Natural killer cell (primary cell): ENCODE measurements at regions of chr15 and their contacts with region 1.

Region 1: DNA sequence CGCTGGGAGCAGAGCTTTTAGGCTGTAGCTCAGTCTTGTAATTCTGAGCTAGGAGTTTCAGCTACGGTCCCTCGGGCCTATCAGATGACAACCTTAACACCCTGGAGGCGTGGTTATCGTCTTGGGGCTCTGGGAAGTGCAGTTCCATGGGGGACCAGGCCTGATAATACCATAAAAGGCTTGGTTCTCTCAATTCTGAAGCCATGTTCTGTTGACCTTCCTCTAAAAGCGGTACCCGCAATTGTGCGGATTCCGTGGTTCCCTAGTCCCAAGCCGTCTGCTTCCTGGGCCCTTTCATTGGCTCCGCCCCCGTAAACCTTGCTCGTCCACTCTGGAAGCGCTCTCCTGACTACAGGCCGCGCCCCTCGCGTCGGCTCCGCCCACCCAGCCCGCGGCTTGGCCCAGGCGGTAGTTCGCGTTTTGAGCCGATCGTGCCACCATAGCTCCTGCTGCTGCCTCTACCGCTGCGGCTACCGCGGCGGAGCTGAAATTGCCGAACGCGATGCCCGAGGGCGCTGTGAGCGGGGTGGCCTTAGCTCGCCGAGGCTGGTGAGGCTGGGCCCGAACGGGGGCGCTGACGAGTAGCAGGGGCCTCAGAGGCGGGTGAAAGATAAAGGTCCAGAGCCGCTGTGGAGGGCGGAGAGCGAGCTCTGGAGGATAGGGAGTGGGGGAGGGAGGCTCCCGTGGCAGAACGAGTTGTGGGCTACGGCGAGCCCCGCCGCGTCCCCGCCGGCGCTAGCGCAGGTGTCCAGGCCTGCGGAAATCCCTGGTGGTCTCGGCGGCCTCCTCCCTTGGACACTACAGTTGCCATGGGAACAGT is at the start of gene MAPKBP1:
- DNase-seq: peak; percentile 98 to 99
- ATAC-seq: peak; percentile 90 to 97 (median 91)
- H3K4me3 ChIP-seq: peak within 1 kb of the TSS; percentile 89
- H3K4me3 Mint-ChIP-seq: peak within 1 kb of the TSS; percentile 97
- H3K27ac ChIP-seq: peak within 1 kb of the TSS; percentile 82
- H3K27ac Mint-ChIP-seq: peak within 1 kb of the TSS; percentile 93 to 94
- H3K4me1 ChIP-seq: peaks cover 23% of the 10 kb centered on the region
- H3K4me1 Mint-ChIP-seq: peaks cover 60 to 63% of the 10 kb centered on the region in 2 donors
- H3K27me3 ChIP-seq: no peaks in the 10 kb centered on the region
- H3K27me3 Mint-ChIP-seq: no peaks in the 10 kb centered on the region
- CTCF ChIP-seq: peak; percentile 72
- total RNA-seq, gene MAPKBP1: 44.8 to 55.4 (median 49.0) TPM

Region 2: DNA sequence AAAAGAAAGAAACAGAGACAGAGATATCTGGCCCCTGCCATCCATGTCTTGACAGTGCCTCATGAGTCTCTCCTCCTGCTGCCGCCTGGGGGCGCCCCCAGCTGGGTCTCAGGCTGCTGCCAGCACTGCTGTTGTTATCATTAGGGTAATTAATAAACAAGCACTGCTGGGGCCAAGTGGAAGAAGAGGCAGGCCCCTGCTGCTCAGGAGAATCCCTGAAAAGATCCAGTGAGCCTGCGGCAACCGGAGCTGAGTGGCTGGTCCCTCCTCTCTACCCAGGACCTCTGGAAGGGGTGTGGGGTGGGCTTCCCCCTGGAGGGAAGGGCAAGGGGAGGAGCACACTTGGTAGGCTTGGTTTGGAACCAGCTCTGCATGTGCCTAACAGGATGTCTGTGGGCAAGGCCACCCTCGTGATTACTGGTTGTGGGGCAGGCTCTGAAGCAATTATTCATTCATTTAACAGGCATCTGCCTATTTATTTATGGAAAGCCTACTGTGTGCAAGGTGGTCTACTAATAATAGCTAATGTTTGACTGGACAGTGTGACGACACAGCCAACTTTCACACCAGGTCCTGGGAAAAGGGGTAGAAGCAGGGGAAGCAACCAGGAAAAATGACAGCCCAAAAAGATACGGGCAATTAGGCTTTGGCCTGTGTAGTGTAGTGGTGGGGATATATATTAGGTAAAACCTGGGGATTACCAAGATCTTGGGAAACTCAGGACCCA is 216.4 kb before region 1 on chr15:
- intact Hi-C with region 1: loop called (anchors 5 kb)
- DNase-seq: peak; percentile 76 to 87
- ATAC-seq: peak; percentile 84 to 92 (median 90)
- H3K4me3 ChIP-seq: no peak overlapping the region
- H3K4me3 Mint-ChIP-seq: peak overlapping the region; percentile 94
- H3K27ac ChIP-seq: peak overlapping the region; percentile 10
- H3K27ac Mint-ChIP-seq: peak overlapping the region; percentile 90 to 95
- H3K4me1 ChIP-seq: peaks cover 21% of the 10 kb centered on the region
- H3K4me1 Mint-ChIP-seq: peaks cover 11 to 26% of the 10 kb centered on the region in 2 donors
- H3K27me3 ChIP-seq: peaks cover 23% of the 10 kb centered on the region
- H3K27me3 Mint-ChIP-seq: peaks cover 0 to 26% of the 10 kb centered on the region in 2 donors
- CTCF ChIP-seq: peak; percentile 97

Region 3: DNA sequence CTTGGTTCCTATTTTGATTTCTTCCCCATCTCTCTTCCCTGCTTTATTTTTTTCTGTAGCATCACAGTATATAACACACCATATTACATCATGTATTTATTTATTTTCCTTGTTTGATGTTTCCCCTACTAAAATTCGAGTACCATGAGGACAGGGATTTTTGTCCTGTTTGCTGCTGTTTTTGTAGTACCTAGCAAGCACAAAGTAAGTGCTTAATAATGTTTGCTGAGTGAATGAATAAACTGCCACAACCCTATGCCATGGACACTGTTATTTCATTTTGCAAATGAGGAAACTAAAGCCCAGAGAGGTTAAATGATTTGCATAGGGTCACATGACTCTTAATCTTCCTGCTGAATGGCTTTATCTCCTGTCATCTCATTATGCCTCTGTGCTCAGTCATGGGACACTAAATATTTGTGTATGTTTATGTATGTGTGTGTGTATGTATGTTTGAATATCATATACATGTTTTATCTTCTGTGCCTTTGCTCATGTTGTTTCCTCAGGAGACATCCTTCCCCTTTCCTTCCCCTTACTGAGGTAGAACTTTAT is 140.1 kb before region 1 on chr15:
- intact Hi-C with region 1: no loop called
- DNase-seq: no peak
- ATAC-seq: no peak
- H3K4me3 ChIP-seq: no peak overlapping the region
- H3K4me3 Mint-ChIP-seq: no peak overlapping the region
- H3K27ac ChIP-seq: no peak overlapping the region
- H3K27ac Mint-ChIP-seq: no peak overlapping the region
- H3K4me1 ChIP-seq: no peaks in the 10 kb centered on the region
- H3K4me1 Mint-ChIP-seq: no peaks in the 10 kb centered on the region
- H3K27me3 ChIP-seq: no peaks in the 10 kb centered on the region
- H3K27me3 Mint-ChIP-seq: peaks cover 0 to 2% of the 10 kb centered on the region in 2 donors
- CTCF ChIP-seq: no peak

Region 4: DNA sequence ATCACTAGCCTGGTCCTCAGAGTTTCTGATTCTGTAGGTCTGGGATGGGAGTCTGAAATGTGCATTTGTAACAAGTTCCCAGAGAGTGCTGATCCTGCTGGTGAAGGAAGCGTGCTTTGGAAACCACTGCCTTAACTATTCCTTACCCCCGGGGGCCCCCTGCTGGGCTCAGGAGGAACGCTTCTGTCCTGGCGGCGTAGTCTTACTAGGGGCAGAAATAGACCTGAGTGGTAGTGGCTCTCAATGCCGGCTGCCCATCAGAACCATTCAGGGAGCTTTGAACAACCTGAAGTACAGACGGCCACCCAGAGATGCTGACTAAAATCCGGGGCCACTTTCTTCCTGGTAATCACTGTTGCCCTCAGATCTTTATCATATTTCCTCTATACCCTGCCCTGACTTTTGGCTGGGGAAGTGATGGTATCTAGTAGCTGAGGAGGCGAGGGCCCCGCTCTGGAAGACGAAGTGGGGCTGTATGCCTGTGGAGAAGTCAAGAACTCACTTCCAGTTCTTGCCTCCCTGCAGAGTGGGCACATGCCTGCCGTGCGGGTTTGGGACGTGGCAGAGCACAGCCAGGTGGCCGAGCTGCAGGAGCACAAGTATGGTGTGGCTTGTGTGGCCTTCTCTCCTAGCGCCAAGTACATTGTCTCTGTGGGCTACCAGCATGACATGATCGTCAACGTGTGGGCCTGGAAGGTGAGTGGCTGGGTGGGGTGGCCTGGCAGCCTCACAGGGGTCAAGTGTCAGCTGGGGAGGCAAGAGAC is 37.3 kb after region 1 on chr15:
- intact Hi-C with region 1: loop called (anchors 1 kb)
- DNase-seq: peak; percentile 75 to 86
- ATAC-seq: peak; percentile 83 to 99 (median 98)
- H3K4me3 ChIP-seq: no peak overlapping the region
- H3K4me3 Mint-ChIP-seq: no peak overlapping the region
- H3K27ac ChIP-seq: no peak overlapping the region
- H3K27ac Mint-ChIP-seq: no peak overlapping the region
- H3K4me1 ChIP-seq: peaks cover 13% of the 10 kb centered on the region
- H3K4me1 Mint-ChIP-seq: peaks cover 7 to 9% of the 10 kb centered on the region in 2 donors
- H3K27me3 ChIP-seq: no peaks in the 10 kb centered on the region
- H3K27me3 Mint-ChIP-seq: no peaks in the 10 kb centered on the region
- CTCF ChIP-seq: peak; percentile 89

Region 5: GRCh38 chr15:41904541-41905005 is 130.3 kb after region 1 on chr15:
- intact Hi-C with region 1: loop called (anchors 1 kb)
- DNase-seq: peak; percentile 70 to 88
- ATAC-seq: peak; percentile 87 to 93 (median 89)
- H3K4me3 ChIP-seq: no peak overlapping the region
- H3K4me3 Mint-ChIP-seq: no peak overlapping the region
- H3K27ac ChIP-seq: no peak overlapping the region
- H3K27ac Mint-ChIP-seq: peak overlapping the region; percentile 45 to 57
- H3K4me1 ChIP-seq: peaks cover 9% of the 10 kb centered on the region
- H3K4me1 Mint-ChIP-seq: peaks cover 7% of the 10 kb centered on the region in 2 donors
- H3K27me3 ChIP-seq: no peaks in the 10 kb centered on the region
- H3K27me3 Mint-ChIP-seq: no peaks in the 10 kb centered on the region
- CTCF ChIP-seq: peak; percentile 96

Region 6: DNA sequence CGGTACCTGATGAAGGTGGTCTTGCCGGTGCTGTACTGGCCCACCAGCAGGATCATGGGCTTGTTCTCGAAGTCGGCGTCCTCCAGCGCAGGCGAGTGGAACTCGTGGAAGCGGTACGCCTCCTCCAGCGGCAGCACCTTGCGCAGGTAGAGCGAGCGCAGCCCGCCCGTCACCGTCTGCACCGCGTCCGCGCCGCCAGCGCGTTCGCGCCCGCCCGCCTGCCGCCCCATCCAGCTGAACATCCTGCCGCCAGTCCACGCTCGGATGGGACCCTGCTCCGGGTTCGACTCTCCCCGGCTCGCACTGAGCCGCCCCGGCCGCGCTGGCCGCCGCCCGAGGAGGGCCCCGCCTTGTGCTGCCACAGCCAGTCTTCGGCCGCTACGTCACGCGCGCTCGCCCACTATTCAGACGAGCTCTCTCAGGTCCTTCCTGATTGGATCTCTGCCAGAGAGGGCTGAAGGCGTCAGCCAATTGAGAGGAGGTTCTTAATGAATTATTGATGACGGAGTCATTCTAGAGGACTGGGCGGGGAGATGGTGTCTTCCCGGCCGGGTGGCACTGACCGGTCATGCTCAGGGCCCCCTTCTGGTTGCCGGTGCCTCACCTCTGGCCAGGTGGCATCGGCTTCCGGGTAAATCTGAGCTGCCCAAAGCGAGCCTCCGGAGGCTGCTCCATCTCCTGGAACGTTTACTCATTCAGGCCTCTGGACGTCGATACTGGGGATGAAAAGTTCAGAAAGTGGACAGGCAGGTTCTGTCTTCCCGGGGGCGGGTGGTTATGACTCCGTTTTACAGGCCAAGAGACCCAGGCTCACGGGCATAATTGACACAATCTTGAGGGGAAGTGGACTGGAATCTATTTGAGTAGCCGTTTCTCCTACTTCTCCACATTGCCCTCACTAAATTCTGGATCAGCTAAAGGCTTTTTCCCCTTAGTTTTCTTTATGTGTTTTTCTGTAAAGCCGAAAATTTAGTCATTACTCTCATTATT is 198.3 kb after region 1 on chr15 and contains the start of gene EHD4:
- intact Hi-C with region 1: loop called (anchors 1 kb)
- DNase-seq: peak; percentile 93 to 98
- ATAC-seq: peak; percentile 83 to 94 (median 88)
- H3K4me3 ChIP-seq: peak within 1 kb of the TSS; percentile 78
- H3K4me3 Mint-ChIP-seq: peak within 1 kb of the TSS; percentile 92
- H3K27ac ChIP-seq: peak within 1 kb of the TSS; percentile 85
- H3K27ac Mint-ChIP-seq: peak within 1 kb of the TSS; percentile 94 to 97
- H3K4me1 ChIP-seq: peaks cover 24% of the 10 kb centered on the region
- H3K4me1 Mint-ChIP-seq: peaks cover 31 to 36% of the 10 kb centered on the region in 2 donors
- H3K27me3 ChIP-seq: peaks cover 4% of the 10 kb centered on the region
- H3K27me3 Mint-ChIP-seq: peaks cover 15 to 21% of the 10 kb centered on the region in 2 donors
- CTCF ChIP-seq: peak; percentile 45
- total RNA-seq, gene EHD4: 28.4 to 34.6 (median 31.7) TPM

Region 7: DNA sequence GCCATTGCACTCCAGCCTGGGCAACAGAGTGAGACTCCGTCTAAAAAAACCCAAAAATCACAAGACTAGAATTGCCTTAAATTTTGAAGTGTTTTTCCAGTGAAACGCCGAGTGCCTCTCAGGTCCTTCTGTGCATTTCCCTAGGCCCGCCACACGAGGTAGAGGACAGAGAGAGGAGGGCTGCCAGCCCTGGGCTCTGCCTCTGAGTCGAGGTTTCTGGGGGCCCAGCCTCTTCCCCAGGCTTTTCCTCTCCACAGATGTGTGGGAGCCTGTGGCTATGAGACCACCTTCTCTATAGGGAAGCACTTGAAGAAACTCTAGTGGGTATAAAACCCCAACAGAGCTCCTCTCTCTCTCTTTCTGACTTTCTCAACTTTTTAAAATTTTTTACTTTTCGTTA is 208.9 kb after region 1 on chr15:
- intact Hi-C with region 1: no loop called
- DNase-seq: no peak
- ATAC-seq: no peak
- H3K4me3 ChIP-seq: no peak overlapping the region
- H3K4me3 Mint-ChIP-seq: no peak overlapping the region
- H3K27ac ChIP-seq: no peak overlapping the region
- H3K27ac Mint-ChIP-seq: no peak overlapping the region
- H3K4me1 ChIP-seq: no peaks in the 10 kb centered on the region
- H3K4me1 Mint-ChIP-seq: no peaks in the 10 kb centered on the region
- H3K27me3 ChIP-seq: no peaks in the 10 kb centered on the region
- H3K27me3 Mint-ChIP-seq: peaks cover 0 to 1% of the 10 kb centered on the region in 2 donors
- CTCF ChIP-seq: no peak